ENCODE measurements at regions of chr6 and their contacts with region 1.

Region 1: DNA sequence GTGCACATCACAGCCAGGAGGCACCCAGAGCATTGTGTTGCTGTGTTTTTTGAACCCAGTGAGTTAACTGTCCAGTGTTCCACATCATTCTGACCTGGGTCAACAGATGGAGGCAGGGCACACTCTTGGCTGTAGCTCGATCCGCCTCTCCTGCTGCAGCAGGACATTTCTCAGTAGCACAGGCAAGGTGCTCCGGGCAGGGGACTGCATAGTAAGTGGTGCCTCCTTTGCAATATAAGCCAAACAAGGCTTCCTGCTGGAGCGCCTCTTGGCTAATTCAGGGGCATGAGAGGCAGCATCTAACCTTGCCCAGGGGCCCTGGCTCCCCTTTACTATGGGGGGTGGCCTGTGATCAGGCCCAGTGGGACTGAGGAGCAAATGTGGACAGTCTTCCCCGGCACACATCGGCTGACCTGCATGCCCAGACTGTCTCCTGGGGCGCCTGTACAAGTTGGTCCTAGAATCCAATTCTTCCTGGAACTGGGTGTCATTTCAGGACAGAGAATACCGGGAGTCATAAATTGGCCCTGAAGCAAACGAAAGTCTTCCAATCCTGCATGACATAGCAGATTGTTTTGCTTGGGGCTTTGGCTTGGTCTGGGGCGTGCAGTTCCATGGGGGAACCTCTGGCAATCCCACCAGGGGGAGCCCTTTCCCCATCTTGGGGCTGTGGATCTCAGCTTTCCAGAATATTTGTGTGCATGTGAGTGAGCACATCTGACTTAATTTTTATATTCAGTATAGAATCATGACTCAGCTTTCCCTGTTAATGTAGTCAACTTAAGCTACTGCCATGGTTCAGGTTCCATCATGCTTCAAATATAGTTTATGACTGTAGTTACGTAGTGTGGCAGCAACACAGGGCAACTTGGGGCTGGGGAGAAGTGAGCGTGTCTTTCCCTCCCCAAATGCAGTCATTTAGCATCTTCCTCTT is 56.0 kb upstream of the DDR1 start:
- DNase-seq: peak; percentile 93
- H3K4me3 ChIP-seq: no peak overlapping the region
- H3K27ac ChIP-seq: peak overlapping the region; percentile 59 to 62
- H3K4me1 ChIP-seq: no peaks in the 10 kb centered on the region
- H3K27me3 ChIP-seq: no peaks in the 10 kb centered on the region
- CTCF ChIP-seq: peak; percentile 86 to 99 (median 97)
- POLR2A ChIP-seq: no peak

Region 2: GRCh38 chr6:30626484-30627366 is 201.6 kb before region 1 on chr6 and contains the start of gene ATAT1:
- intact Hi-C with region 1: no loop called
- DNase-seq: peak; percentile 87
- H3K4me3 ChIP-seq: peak within 1 kb of the TSS; percentile 53 to 56
- H3K27ac ChIP-seq: peak within 1 kb of the TSS; percentile 86 to 90
- H3K4me1 ChIP-seq: no peaks in the 10 kb centered on the region
- H3K27me3 ChIP-seq: no peaks in the 10 kb centered on the region
- CTCF ChIP-seq: peak in 3 of 4 experiments; percentile 33 to 65 (median 62)
- POLR2A ChIP-seq: peak; percentile 71
- total RNA-seq, gene ATAT1: 8.7 to 11.0 TPM

Region 3: DNA sequence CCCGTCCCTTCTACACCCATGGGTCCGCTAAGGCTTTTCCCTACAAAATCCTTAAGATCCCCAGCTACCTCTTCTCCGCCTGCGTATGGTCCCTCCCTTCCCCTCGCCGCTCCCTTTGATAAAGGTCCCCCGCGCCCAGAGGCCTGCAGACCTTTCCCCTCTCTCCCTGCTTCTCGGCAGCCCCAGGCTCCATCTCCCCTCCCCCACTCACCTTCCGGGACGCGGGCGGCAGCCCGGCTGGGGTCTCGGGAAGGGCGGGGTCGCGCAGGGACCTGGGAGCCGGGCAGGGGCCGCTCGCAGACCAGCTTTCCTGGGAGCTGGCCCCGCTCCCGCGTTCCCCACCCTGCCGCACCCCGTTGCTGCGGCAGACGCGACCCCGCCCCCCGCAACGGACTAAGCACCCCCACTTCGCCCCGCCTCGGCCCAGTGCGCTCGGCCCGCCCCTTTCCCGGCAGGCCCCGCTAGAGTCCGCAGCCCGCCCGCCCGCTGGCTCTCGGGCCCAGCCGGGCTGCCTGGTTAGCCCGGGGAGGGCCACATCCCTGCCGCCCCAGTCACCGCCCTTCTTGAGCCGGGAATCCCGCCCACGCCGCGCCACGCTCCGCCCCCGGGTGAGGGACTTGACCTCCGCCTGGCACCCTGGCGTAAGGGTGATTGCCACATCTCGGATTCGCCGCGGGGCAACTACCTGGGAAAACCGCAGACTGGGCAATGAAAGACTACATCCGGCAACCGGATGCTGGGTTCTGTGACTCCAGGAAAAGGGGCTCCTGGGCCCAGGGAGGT is 85.8 kb before region 1 on chr6 and contains the start of gene FLOT1:
- intact Hi-C with region 1: loop called (anchors 5 kb)
- DNase-seq: peak; percentile 98
- H3K4me3 ChIP-seq: peak within 1 kb of the TSS; percentile 76 to 79
- H3K27ac ChIP-seq: peak within 1 kb of the TSS; percentile 95
- H3K4me1 ChIP-seq: no peaks in the 10 kb centered on the region
- H3K27me3 ChIP-seq: no peaks in the 10 kb centered on the region
- CTCF ChIP-seq: peak in 1 of 4 experiments; percentile 10
- POLR2A ChIP-seq: peak; percentile 82
- total RNA-seq, gene FLOT1: 117 to 133 TPM

Region 4: GRCh38 chr6:30781743-30782424 is 46.4 kb before region 1 on chr6:
- intact Hi-C with region 1: loop called (anchors 5 kb)
- DNase-seq: peak; percentile 81
- H3K4me3 ChIP-seq: no peak overlapping the region
- H3K27ac ChIP-seq: peak overlapping the region; percentile 79 to 80
- H3K4me1 ChIP-seq: peaks cover 21% of the 10 kb centered on the region
- H3K27me3 ChIP-seq: no peaks in the 10 kb centered on the region
- CTCF ChIP-seq: no peak
- POLR2A ChIP-seq: peak; percentile 12

Region 5: GRCh38 chr6:30877419-30878371 is 49.4 kb after region 1 on chr6:
- intact Hi-C with region 1: loop called (anchors 1 kb)
- DNase-seq: peak; percentile 91
- H3K4me3 ChIP-seq: peak overlapping the region; percentile 22 to 27
- H3K27ac ChIP-seq: peak overlapping the region; percentile 77 to 88
- H3K4me1 ChIP-seq: peaks cover 18% of the 10 kb centered on the region
- H3K27me3 ChIP-seq: no peaks in the 10 kb centered on the region
- CTCF ChIP-seq: peak; percentile 77 to 96 (median 92)
- POLR2A ChIP-seq: peak; percentile 29

Region 6: DNA sequence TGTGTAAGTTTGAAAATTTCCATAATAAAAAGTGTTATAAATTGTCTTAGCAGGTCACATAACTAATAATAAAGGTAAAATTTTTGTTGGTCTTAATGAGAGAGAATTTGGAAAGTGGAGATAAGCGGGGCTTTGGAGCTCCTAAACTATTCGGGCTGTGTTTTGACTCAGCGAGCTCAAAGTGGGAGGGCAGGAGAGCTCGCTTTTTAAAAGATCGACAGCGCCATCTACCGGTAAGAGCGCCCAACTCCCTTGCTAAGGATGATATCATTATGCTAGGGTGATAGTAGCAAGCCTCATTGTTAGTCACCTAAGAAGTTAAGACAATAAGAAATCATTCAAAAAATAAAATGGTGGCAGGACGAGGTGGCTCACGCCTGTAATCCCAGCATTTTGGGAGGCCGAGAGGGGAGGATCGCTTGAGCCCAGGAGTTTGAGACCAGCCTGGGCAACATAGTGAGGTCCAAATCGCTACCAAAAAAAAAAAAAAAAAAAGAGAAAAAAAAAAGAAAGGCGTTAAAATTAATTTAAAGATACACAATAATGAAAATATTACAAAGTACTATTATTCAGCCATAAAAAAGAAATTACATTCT is 259.3 kb after region 1 on chr6:
- intact Hi-C with region 1: loop called (anchors 5 kb)
- DNase-seq: peak; percentile 88
- H3K4me3 ChIP-seq: no peak overlapping the region
- H3K27ac ChIP-seq: no peak overlapping the region
- H3K4me1 ChIP-seq: no peaks in the 10 kb centered on the region
- H3K27me3 ChIP-seq: no peaks in the 10 kb centered on the region
- CTCF ChIP-seq: peak; percentile 65 to 86 (median 84)
- POLR2A ChIP-seq: no peak

Measured in prostate gland (tissue), 2 donors.